Heart left ventricle (tissue), 16 donors: ENCODE measurements at regions of chr9 and their contacts with region 1.

Region 1: GRCh38 chr9:70093944-70094343 is 50.3 kb downstream of the MAMDC2 start:
- DNase-seq: no peak
- ATAC-seq: peak; percentile 28 to 48 (median 37)
- H3K4me3 ChIP-seq: no peak overlapping the region
- H3K27ac ChIP-seq: peak overlapping the region in 1 of 12 donors; percentile 46
- H3K4me1 ChIP-seq: peaks cover 0 to 29% (median under 1%) of the 10 kb centered on the region in 12 donors
- H3K27me3 ChIP-seq: no peaks in the 10 kb centered on the region
- CTCF ChIP-seq: no peak
- POLR2A ChIP-seq: no peak

Region 2: DNA sequence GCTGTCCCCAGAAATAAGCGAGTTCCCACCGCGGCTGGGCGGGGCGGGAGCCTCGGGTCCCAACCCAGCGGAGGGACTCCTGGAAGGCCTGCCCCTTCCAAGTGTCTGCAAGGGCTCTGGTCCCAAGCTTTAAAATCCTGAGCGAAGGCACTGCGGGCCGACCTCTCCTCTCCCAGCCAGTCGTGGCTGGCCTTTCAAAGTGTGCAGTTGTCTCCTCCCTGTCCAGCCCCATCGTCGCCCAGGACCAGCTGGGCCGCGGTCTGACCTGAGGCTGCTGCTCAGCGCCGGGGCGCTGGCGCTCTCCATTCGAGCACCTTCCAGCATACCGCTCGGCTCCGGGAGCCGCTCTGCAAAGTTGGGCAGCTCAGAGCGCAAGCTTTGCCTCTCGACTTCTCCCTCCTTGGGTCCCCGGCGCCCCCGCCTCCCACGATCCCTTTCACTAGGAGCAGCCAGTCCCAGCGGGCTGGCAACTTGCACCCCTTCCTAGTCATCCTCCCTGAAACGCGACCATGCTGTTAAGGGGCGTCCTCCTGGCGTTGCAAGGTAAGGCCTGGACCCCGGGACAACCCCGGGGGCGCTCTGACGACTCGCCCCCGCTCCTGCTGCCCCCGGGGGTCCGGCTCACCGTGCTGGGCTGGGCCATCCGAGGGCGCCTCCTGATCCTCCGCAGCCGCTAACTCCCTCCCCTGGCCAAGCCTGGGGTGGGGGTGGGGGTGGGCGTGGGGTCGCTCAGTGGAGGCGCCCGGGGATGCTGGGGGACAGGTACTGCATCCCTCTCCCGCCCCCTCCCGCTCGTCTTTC is 50.1 kb before region 1 on chr9 and contains the start of gene MAMDC2:
- intact Hi-C with region 1: loop called in 2 of 10 experiments (anchors 5 to 10 kb)
- DNase-seq: peak; percentile 51 to 84 (median 61)
- ATAC-seq: peak; percentile 48 to 85 (median 82)
- H3K4me3 ChIP-seq: peak within 1 kb of the TSS; percentile 38 to 78 (median 56)
- H3K27ac ChIP-seq: peak within 1 kb of the TSS in 11 of 12 donors; percentile 59 to 92 (median 77)
- H3K4me1 ChIP-seq: peaks cover 0 to 48% (median 28%) of the 10 kb centered on the region in 12 donors
- H3K27me3 ChIP-seq: peaks cover 0 to 8% (median 0%) of the 10 kb centered on the region in 9 donors
- CTCF ChIP-seq: no peak
- POLR2A ChIP-seq: peak in 1 of 2 donors; percentile 50
- total RNA-seq, gene MAMDC2: 2.5 to 23.9 (median 5.2) TPM

Region 3: GRCh38 chr9:70111042-70111602 is 17.2 kb after region 1 on chr9:
- intact Hi-C with region 1: no loop called
- DNase-seq: peak; percentile 76 to 88 (median 79)
- ATAC-seq: peak; percentile 47 to 87 (median 84)
- H3K4me3 ChIP-seq: no peak overlapping the region
- H3K27ac ChIP-seq: peak overlapping the region in 8 of 12 donors; percentile 7 to 61 (median 19)
- H3K4me1 ChIP-seq: peaks cover 0 to 17% (median 3%) of the 10 kb centered on the region in 12 donors
- H3K27me3 ChIP-seq: no peaks in the 10 kb centered on the region
- CTCF ChIP-seq: peak; percentile 70 to 95 (median 84)
- POLR2A ChIP-seq: no peak

Region 4: GRCh38 chr9:70147614-70148013 is 53.7 kb after region 1 on chr9:
- intact Hi-C with region 1: loop called in 1 of 10 experiments (anchors 10 kb)
- DNase-seq: no peak
- ATAC-seq: no peak
- H3K4me3 ChIP-seq: no peak overlapping the region
- H3K27ac ChIP-seq: no peak overlapping the region
- H3K4me1 ChIP-seq: no peaks in the 10 kb centered on the region
- H3K27me3 ChIP-seq: no peaks in the 10 kb centered on the region
- CTCF ChIP-seq: no peak
- POLR2A ChIP-seq: no peak

Region 5: DNA sequence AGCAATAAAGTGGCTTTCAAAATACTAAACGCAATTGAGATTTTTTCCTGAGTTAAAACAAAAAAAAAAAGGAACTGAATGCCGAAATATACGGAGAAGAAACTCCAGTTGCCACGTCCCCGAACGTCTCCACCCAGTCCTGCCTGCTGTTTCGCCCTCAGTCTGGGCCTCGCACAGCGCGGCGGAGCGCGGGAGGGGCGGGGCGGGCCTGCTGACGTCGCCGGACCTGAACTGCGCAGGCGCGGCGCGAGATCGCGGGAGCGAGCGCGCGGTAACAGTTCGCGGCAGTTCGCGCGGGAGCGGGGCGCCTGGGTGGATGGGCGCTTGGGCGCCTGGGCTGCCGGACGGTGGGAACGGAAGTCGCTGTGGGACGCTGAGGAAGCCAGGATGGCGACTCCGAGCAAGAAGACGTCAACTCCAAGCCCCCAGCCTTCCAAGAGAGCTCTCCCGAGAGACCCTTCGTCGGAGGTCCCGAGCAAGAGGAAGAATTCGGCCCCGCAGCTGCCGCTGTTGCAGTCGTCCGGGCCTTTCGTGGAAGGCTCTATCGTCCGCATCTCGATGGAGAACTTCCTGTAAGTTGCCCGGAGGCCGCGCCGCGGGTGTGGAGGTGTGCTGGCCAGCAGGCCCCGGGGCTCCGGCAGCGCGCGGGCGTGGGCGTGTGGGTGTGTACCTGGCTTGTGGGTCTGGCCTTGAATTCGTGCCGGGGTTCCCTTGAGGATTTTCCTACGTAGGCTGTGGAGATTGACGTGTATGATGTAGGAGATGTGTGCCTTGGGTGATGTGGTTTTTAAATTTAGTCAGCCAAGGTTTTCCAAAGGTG is 165.0 kb after region 1 on chr9 and contains the start of gene SMC5:
- intact Hi-C with region 1: no loop called
- DNase-seq: peak; percentile 91 to 95 (median 92)
- ATAC-seq: peak; percentile 92 to 97 (median 95)
- H3K4me3 ChIP-seq: peak within 1 kb of the TSS; percentile 70 to 97 (median 85)
- H3K27ac ChIP-seq: peak within 1 kb of the TSS; percentile 86 to 97 (median 94)
- H3K4me1 ChIP-seq: peaks cover 5 to 58% (median 48%) of the 10 kb centered on the region in 12 donors
- H3K27me3 ChIP-seq: no peaks in the 10 kb centered on the region
- CTCF ChIP-seq: peak in 1 of 12 donors; percentile 9
- POLR2A ChIP-seq: peak; percentile 85 to 95
- total RNA-seq, gene SMC5: 8.4 to 14.6 (median 11.4) TPM

Region 6: GRCh38 chr9:70668751-70669150 is 574.8 kb after region 1 on chr9:
- intact Hi-C with region 1: no loop called
- DNase-seq: no peak
- ATAC-seq: peak in 1 of 4 donors; percentile 39
- H3K4me3 ChIP-seq: no peak overlapping the region
- H3K27ac ChIP-seq: no peak overlapping the region
- H3K4me1 ChIP-seq: peaks cover 0 to 6% (median 0%) of the 10 kb centered on the region in 12 donors
- H3K27me3 ChIP-seq: no peaks in the 10 kb centered on the region
- CTCF ChIP-seq: no peak
- POLR2A ChIP-seq: no peak